B cell (primary cell): ENCODE measurements at regions of chr1 and their contacts with region 1.

Region 1: GRCh38 chr1:205791568-205792180 is 16.4 kb upstream of the RAB29 start:
- DNase-seq: peak; percentile 74
- ATAC-seq: peak; percentile 82
- H3K4me3 ChIP-seq: no peak overlapping the region
- H3K4me3 Mint-ChIP-seq: no peak overlapping the region
- H3K27ac ChIP-seq: no peak overlapping the region
- H3K27ac Mint-ChIP-seq: peak overlapping the region; percentile 42
- H3K4me1 ChIP-seq: peaks cover 5 to 27% of the 10 kb centered on the region in 2 donors
- H3K4me1 Mint-ChIP-seq: peaks cover 27% of the 10 kb centered on the region
- H3K27me3 ChIP-seq: no peaks in the 10 kb centered on the region
- H3K27me3 Mint-ChIP-seq: no peaks in the 10 kb centered on the region
- CTCF ChIP-seq: peak; percentile 82

Region 2: GRCh38 chr1:205287767-205288559 is 503.7 kb before region 1 on chr1:
- CTCF ChIA-PET with region 1: no interaction called
- POLR2A ChIA-PET with region 1: no interaction called
- intact Hi-C with region 1: no loop called
- DNase-seq: peak; percentile 97
- ATAC-seq: peak; percentile 72
- H3K4me3 ChIP-seq: peak overlapping the region in 4 of 5 experiments; percentile 10 to 45 (median 29)
- H3K4me3 Mint-ChIP-seq: peak overlapping the region; percentile 74
- H3K27ac ChIP-seq: peak overlapping the region; percentile 94
- H3K27ac Mint-ChIP-seq: peak overlapping the region; percentile 92
- H3K4me1 ChIP-seq: peaks cover 87 to 96% of the 10 kb centered on the region in 2 donors
- H3K4me1 Mint-ChIP-seq: peaks cover 83% of the 10 kb centered on the region
- H3K27me3 ChIP-seq: no peaks in the 10 kb centered on the region
- H3K27me3 Mint-ChIP-seq: no peaks in the 10 kb centered on the region
- CTCF ChIP-seq: no peak

Region 3: DNA sequence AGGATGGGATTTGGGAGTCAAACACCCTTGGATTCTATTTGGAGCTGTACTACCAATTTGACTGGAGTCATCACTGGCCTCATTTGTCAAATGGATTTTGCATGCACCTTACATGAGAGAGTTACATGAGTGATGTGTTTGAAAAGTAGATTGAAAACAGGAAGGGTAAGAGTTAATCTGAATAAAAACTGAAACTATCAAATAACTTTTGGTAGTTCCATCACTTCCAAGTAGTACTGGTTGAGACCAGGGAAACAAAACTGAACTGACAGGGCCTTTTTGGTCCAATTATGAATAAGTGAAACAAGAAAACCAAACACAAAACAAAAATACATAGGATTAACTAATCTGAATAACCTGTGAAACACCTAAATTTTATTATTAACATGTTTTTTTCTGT is 71.9 kb before region 1 on chr1:
- CTCF ChIA-PET with region 1: no interaction called
- POLR2A ChIA-PET with region 1: no interaction called
- intact Hi-C with region 1: no loop called
- DNase-seq: no peak
- ATAC-seq: no peak
- H3K4me3 ChIP-seq: no peak overlapping the region
- H3K4me3 Mint-ChIP-seq: no peak overlapping the region
- H3K27ac ChIP-seq: no peak overlapping the region
- H3K27ac Mint-ChIP-seq: no peak overlapping the region
- H3K4me1 ChIP-seq: no peaks in the 10 kb centered on the region
- H3K4me1 Mint-ChIP-seq: peaks cover 5% of the 10 kb centered on the region
- H3K27me3 ChIP-seq: no peaks in the 10 kb centered on the region
- H3K27me3 Mint-ChIP-seq: no peaks in the 10 kb centered on the region
- CTCF ChIP-seq: no peak

Region 4: DNA sequence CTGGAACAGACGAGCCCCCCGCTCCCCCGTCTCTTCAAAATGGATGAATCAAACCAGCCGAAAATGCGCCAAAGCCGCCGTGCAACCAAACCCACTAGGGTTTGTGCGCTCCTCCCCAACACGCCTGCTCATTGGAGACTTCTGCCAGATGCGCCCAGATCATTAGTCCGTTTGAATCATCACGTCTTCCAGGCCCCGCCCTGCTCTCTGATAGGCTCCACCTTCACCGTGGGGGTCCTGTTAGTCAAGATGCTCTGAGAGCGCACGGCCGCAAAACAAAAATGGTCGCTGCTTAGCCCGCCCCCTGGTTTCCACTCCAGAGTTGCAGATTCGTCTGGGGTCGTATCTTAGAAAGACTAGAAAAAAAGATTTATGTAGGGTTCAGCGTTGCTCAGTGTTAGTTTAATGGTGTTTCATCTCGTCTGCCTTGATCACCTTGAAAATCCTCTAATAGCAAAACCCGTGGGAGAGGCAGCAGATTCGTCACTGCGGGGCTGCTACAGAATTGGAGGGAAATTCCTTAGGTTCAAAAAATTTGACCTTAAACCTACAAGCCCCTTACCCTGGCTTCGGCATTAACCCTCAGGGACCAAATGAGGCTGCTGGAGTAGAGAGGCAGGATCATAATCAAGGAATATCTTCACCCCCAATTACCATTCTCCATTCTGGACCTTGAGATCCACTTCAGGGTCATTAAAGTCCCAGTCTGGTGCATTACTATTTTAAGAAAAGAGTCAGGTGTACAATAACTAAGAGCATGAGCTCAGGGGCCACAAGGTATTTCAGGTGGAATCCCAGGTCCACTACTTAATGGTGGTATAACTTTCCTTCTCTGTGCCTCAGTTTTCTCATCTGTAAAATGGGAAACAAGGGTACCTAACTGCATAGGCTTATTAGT is 41.3 kb before region 1 on chr1 and contains the start of gene NUCKS1:
- CTCF ChIA-PET with region 1: no interaction called
- POLR2A ChIA-PET with region 1: no interaction called
- intact Hi-C with region 1: no loop called
- DNase-seq: peak; percentile 98
- ATAC-seq: peak; percentile 80
- H3K4me3 ChIP-seq: peak within 1 kb of the TSS; percentile 61 to 97 (median 88)
- H3K4me3 Mint-ChIP-seq: peak within 1 kb of the TSS; percentile 95
- H3K27ac ChIP-seq: peak within 1 kb of the TSS; percentile 83 to 95
- H3K27ac Mint-ChIP-seq: peak within 1 kb of the TSS; percentile 97
- H3K4me1 ChIP-seq: peaks cover 22 to 29% of the 10 kb centered on the region in 2 donors
- H3K4me1 Mint-ChIP-seq: peaks cover 33% of the 10 kb centered on the region
- H3K27me3 ChIP-seq: no peaks in the 10 kb centered on the region
- H3K27me3 Mint-ChIP-seq: no peaks in the 10 kb centered on the region
- CTCF ChIP-seq: no peak
- total RNA-seq, gene NUCKS1: 87.6 and 90.1 TPM in 2 replicates

Region 5: GRCh38 chr1:205775015-205775716 is 16.5 kb before region 1 on chr1 and contains the start of gene RAB29:
- CTCF ChIA-PET with region 1: interaction called, 10 read pairs
- POLR2A ChIA-PET with region 1: no interaction called
- intact Hi-C with region 1: no loop called
- DNase-seq: peak; percentile 94
- ATAC-seq: peak; percentile 89
- H3K4me3 ChIP-seq: peak within 1 kb of the TSS; percentile 73 to 89 (median 86)
- H3K4me3 Mint-ChIP-seq: peak within 1 kb of the TSS; percentile 98
- H3K27ac ChIP-seq: peak within 1 kb of the TSS; percentile 93 to 96
- H3K27ac Mint-ChIP-seq: peak within 1 kb of the TSS; percentile 99
- H3K4me1 ChIP-seq: peaks cover 44 to 48% of the 10 kb centered on the region in 2 donors
- H3K4me1 Mint-ChIP-seq: peaks cover 54% of the 10 kb centered on the region
- H3K27me3 ChIP-seq: no peaks in the 10 kb centered on the region
- H3K27me3 Mint-ChIP-seq: no peaks in the 10 kb centered on the region
- CTCF ChIP-seq: no peak
- total RNA-seq, gene RAB29: 59.7 and 61.4 TPM in 2 replicates

Region 6: DNA sequence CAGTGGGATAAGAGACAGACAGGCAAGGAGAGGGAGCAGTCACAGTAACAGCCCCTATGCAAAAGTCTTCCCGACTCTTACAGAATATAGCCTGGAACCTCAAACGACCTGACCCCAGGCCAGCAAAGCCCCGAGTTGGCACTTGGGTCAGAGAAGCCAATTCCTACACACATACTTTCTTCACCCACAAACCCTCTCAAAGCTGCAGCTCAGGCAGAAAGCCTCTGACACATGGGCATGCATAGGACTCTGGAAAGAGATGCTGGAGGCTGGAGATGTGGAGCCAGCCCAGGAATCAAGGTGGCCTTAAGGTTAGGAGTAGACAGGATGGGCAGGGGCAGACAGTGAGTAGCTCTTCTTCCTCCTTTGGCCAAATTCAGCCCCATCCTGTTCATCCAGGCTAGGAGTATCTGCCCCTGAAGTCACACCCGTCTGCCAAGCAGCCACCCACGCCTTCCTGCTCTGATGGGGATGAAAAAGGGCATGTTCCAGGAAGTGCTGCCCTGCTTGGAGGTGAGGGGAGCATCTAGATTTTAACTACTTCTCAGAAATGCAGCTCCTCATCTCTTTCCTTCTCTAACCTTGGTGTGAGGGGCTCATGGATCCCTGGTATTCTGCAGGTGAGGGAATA is 13.5 kb after region 1 on chr1:
- CTCF ChIA-PET with region 1: interaction called, 22 read pairs
- POLR2A ChIA-PET with region 1: no interaction called
- intact Hi-C with region 1: no loop called
- DNase-seq: no peak
- ATAC-seq: no peak
- H3K4me3 ChIP-seq: no peak overlapping the region
- H3K4me3 Mint-ChIP-seq: no peak overlapping the region
- H3K27ac ChIP-seq: peak overlapping the region in 1 of 2 donors; percentile 1
- H3K27ac Mint-ChIP-seq: no peak overlapping the region
- H3K4me1 ChIP-seq: peaks cover 34 to 37% of the 10 kb centered on the region in 2 donors
- H3K4me1 Mint-ChIP-seq: peaks cover 54% of the 10 kb centered on the region
- H3K27me3 ChIP-seq: no peaks in the 10 kb centered on the region
- H3K27me3 Mint-ChIP-seq: no peaks in the 10 kb centered on the region
- CTCF ChIP-seq: no peak

Region 7: GRCh38 chr1:205812878-205813754 is 21.4 kb after region 1 on chr1 and contains the start of gene SLC41A1:
- CTCF ChIA-PET with region 1: interaction called, 10 read pairs
- POLR2A ChIA-PET with region 1: no interaction called
- intact Hi-C with region 1: no loop called
- DNase-seq: peak; percentile 96
- ATAC-seq: peak; percentile 96
- H3K4me3 ChIP-seq: peak within 1 kb of the TSS; percentile 52 to 83 (median 80)
- H3K4me3 Mint-ChIP-seq: peak within 1 kb of the TSS; percentile 96
- H3K27ac ChIP-seq: peak within 1 kb of the TSS; percentile 60 to 77
- H3K27ac Mint-ChIP-seq: peak within 1 kb of the TSS; percentile 92
- H3K4me1 ChIP-seq: peaks cover 33 to 46% of the 10 kb centered on the region in 2 donors
- H3K4me1 Mint-ChIP-seq: peaks cover 51% of the 10 kb centered on the region
- H3K27me3 ChIP-seq: no peaks in the 10 kb centered on the region
- H3K27me3 Mint-ChIP-seq: no peaks in the 10 kb centered on the region
- CTCF ChIP-seq: no peak
- total RNA-seq, gene SLC41A1: 24.2 and 24.7 TPM in 2 replicates

Region 8: GRCh38 chr1:205858141-205858961 is 66.7 kb after region 1 on chr1:
- CTCF ChIA-PET with region 1: interaction called, 24 read pairs
- POLR2A ChIA-PET with region 1: interaction called, 3 read pairs
- intact Hi-C with region 1: loop called (anchors 1 kb)
- DNase-seq: no peak
- ATAC-seq: no peak
- H3K4me3 ChIP-seq: no peak overlapping the region
- H3K4me3 Mint-ChIP-seq: peak overlapping the region; percentile 75
- H3K27ac ChIP-seq: peak overlapping the region; percentile 3 to 47
- H3K27ac Mint-ChIP-seq: peak overlapping the region; percentile 77
- H3K4me1 ChIP-seq: peaks cover 23 to 24% of the 10 kb centered on the region in 2 donors
- H3K4me1 Mint-ChIP-seq: peaks cover 34% of the 10 kb centered on the region
- H3K27me3 ChIP-seq: no peaks in the 10 kb centered on the region
- H3K27me3 Mint-ChIP-seq: no peaks in the 10 kb centered on the region
- CTCF ChIP-seq: no peak

Region 9: DNA sequence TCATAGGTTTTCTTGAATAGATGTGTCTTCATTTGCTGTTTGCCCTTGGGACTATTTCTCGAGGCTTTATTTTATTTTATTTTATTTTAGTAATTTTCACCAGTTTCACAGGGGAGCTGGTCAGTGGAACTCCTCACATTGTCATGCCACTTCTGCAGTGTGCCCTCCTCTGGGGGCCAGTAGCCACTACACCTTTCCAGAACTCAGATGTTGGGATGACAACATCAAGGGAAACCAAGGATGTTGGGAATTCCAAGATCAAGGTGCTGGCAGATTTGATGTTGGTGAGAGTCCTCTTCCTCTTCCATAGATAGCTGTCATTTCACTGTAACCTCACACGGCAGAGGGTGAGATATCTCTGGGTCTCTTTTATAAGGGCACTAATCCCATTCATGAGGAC is 116.1 kb after region 1 on chr1:
- CTCF ChIA-PET with region 1: interaction called, 30 read pairs
- POLR2A ChIA-PET with region 1: no interaction called
- intact Hi-C with region 1: loop called (anchors 1 kb)
- DNase-seq: no peak
- ATAC-seq: no peak
- H3K4me3 ChIP-seq: no peak overlapping the region
- H3K4me3 Mint-ChIP-seq: no peak overlapping the region
- H3K27ac ChIP-seq: no peak overlapping the region
- H3K27ac Mint-ChIP-seq: no peak overlapping the region
- H3K4me1 ChIP-seq: no peaks in the 10 kb centered on the region
- H3K4me1 Mint-ChIP-seq: peaks cover 6% of the 10 kb centered on the region
- H3K27me3 ChIP-seq: no peaks in the 10 kb centered on the region
- H3K27me3 Mint-ChIP-seq: no peaks in the 10 kb centered on the region
- CTCF ChIP-seq: no peak

Region 10: GRCh38 chr1:205919026-205919746 is 127.5 kb after region 1 on chr1:
- CTCF ChIA-PET with region 1: interaction called, 65 read pairs
- POLR2A ChIA-PET with region 1: no interaction called
- intact Hi-C with region 1: loop called (anchors 1 kb)
- DNase-seq: peak; percentile 80
- ATAC-seq: peak; percentile 71
- H3K4me3 ChIP-seq: no peak overlapping the region
- H3K4me3 Mint-ChIP-seq: no peak overlapping the region
- H3K27ac ChIP-seq: no peak overlapping the region
- H3K27ac Mint-ChIP-seq: no peak overlapping the region
- H3K4me1 ChIP-seq: no peaks in the 10 kb centered on the region
- H3K4me1 Mint-ChIP-seq: peaks cover 2% of the 10 kb centered on the region
- H3K27me3 ChIP-seq: no peaks in the 10 kb centered on the region
- H3K27me3 Mint-ChIP-seq: peaks cover 4% of the 10 kb centered on the region
- CTCF ChIP-seq: peak; percentile 93